ENCODE measurements at regions of chr12 and their contacts with region 1.

Region 1: DNA sequence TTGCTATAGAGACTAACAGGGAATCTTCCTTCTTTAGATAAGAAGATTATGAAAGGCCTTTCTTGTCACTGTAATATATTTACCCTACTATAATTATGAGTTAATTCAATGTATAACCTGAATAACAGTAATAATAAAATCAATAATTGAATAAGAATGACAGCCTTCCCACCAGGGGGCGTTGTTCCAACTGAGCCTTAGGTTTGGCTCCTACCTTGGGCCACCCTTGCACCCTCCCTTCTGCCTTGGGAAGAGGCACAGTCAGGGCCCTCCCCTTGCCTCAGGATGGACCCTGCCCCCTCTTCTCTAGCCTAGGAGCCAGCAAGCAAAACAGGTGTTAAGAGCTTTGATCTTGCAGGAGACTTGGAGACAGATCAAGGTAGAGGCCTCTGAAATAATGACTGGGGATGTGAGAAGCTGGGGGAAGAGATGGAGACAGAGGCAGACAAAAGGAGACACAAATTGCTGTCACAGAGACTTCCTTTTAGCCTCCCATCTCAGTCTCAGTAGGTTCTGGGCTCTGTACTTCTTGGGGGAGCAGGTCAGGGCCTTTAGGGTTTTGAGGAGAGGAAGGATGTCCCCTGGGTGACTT is 40.1 kb upstream of the CISTR start:
- H3K4me3 Mint-ChIP-seq: no peak overlapping the region
- H3K27ac Mint-ChIP-seq: no peak overlapping the region
- H3K4me1 Mint-ChIP-seq: no peaks in the 10 kb centered on the region
- H3K27me3 Mint-ChIP-seq: peaks cover 26% of the 10 kb centered on the region

Region 2: DNA sequence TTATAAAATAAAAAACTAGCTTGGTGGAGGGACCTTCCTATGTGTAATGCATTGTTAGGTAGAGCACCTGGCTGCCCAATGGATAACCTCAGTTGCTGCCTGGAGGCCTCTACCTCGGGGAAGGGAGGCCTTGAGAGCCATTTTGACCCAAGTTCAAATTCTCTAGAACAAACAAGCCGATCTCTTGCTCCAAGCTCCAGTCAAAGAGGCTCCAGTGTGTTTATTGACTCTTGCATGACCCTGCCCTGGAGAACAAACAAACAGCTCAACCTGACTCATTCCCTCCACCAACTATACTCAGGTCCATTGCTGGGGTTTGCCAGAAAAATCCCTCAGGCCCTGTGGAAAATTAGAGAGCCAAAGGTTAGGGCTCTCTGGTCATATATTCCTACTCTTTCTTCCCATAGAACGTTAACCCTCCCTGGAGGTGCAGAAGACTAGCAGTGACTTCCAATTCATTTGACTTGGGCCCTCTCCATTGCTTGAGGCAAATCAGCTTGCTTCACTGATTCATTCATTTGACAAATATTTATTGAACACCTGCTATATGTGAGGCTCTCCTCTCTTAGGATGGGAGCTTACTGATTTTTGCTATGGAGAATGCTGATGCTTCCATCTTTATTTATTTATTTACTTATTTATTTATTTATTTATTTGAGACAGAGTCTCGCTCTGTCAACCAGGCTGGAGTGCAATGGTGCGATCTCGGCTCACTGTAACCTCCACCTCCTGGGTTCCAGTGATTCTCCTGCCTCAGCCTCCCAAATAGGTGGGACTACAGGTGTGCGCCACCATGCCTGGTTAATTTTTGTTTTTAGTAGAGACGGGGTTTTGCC is 33.6 kb after region 1 on chr12:
- intact Hi-C with region 1: no loop called
- H3K4me3 Mint-ChIP-seq: no peak overlapping the region
- H3K27ac Mint-ChIP-seq: no peak overlapping the region
- H3K4me1 Mint-ChIP-seq: peaks cover 5% of the 10 kb centered on the region
- H3K27me3 Mint-ChIP-seq: peaks cover 56% of the 10 kb centered on the region

Region 3: DNA sequence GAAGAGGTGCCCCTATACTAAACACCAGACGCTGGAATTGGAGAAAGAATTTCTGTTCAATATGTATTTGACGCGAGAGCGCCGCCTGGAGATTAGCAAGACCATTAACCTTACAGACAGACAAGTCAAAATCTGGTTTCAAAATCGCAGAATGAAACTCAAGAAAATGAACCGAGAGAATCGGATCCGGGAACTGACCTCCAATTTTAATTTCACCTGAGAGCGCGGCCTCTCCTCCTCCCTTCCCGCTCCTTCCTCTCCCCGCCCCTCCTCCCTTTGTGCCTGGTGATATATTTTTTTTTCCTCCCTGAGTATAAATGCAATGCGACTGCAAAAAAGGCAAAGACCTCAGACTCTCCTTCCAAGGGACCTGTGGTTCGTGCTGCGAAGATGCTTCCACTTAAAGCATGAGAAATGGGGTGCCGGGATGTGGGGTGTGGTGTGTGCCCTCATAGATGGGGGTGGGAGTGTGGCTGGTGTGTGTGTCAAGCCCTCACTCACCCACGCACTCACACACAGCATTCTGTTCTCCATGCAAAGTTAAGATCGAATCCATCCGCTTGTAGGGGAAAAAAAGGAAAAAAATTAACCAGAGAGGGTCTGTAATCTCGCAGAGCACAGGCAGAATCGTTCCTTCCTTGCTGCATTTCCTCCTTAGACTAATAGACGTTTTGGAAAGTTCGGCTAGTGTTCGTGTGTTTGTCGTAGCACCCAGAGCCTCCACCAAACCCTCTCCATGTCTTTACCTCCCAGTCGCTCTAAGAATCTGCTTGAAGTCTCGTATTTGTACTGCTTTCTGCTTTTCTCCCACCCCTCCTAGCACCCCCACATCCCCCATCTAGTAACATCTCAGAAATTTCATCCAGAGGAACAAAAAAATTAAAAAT is 197.6 kb after region 1 on chr12:
- intact Hi-C with region 1: loop called (anchors 2 kb)
- H3K4me3 Mint-ChIP-seq: no peak overlapping the region
- H3K27ac Mint-ChIP-seq: no peak overlapping the region
- H3K4me1 Mint-ChIP-seq: peaks cover 28% of the 10 kb centered on the region
- H3K27me3 Mint-ChIP-seq: peaks cover 98% of the 10 kb centered on the region

Measured in dendritic cell treated with granulocyte-macrophage colony-stimulating factor and Interleukin-4, amounts not matched to agents 40 ng/mL and 50 ng/mL, for 4 days (primary cell).